Posterior vena cava (tissue), 2 donors: ENCODE measurements at regions of chr1 and their contacts with region 1.

Region 1: GRCh38 chr1:227728059-227728891 is 6.8 kb downstream of the JMJD4 start:
- DNase-seq: peak; percentile 83

Region 2: DNA sequence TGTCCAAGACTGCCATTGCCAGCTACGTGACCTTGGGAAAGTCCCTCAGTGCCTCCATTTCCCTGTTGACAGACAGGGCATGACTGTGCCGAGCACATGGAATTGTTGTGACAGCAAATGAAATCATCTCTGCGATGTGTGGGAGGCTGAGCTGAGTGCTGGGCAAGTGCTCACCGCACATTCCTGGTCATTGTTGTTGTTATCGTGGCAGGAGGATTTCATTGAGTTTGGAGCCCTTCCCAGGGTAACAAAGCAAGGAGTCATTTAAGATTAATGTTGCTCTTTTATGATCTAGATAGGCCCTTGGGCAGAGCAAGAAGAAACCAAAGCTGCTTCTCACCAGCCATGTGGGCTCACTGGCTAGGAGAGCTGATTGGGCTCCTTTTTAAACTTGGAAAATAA is 949.6 kb before region 1 on chr1:
- intact Hi-C with region 1: loop called in 1 of 2 experiments (anchors 10 kb)
- DNase-seq: no peak

Region 3: GRCh38 chr1:227299241-227299627 is 429.0 kb before region 1 on chr1:
- intact Hi-C with region 1: no loop called
- DNase-seq: no peak

Region 4: DNA sequence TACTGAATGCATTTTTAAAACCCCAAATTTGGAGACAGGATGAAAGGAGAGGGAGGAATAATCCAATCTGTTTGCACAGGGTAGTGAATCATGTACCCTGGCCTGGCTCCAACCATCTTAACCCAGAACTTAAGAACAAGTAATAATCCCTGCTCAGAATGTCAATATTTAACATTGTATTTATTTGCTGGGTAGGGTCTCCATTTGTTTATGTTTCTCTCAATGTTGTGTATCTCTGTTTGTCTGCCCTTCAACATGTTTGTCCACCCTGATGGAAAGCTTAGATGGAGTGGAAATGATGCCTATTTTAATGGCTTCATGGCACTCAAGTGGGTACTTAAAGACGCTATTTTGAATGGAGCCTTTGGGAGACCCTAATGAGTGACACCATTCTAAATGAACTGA is 355.5 kb before region 1 on chr1:
- intact Hi-C with region 1: no loop called
- DNase-seq: no peak

Region 5: DNA sequence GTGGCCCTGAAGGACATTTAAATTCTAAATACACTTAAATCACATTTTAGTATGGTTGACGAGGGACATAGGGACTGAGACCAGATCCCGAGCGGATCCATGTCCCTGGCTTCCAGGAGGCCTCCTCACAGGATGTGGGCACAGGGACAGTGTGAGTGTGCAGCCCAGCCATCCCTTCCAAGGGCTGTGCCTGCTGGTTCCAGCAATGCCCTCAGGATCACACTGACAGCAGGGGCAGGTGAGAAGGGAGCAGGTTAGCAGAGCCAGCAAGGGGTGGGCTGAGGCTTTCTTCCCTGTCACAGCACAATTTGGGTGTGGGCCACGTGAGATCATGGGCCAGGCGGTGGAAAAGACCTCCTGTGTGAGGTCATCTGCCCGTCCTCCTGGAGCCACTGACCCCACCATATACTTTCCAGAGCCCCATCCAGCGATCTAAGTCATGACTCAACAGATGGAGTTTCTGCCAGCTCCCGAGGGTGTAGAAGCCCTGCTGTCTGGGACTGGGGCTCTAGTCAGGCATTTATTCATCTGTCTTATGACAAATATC is 50.2 kb after region 1 on chr1:
- intact Hi-C with region 1: no loop called
- DNase-seq: peak; percentile 82